ENCODE measurements at regions of chr5 and their contacts with region 1.

Region 1: DNA sequence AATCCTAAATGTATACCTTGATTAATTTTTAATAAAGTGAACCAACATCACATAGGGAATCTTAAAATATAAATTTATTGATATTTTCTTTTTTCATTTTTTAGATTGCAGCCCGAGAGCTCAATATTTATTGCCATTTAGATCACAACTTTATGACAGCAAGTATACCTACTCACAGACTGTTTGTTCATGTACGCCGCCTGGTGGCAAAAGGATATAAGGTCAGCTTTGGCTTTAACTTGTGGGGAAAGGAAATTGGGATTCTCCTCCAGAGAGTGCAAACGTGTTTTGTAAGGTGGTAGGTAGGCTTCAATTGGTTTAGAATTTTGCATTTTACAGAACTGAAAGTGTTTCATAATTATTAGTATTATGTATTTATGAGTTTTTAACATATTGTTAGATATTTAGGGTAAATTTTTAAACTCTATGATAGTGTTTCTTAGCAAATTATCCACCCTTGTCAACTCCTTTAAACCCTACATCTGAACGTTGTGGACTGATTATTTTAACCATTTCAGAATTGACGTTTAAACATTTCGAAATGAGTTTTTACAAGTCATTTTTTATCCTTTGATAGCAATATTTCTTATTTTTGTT is 17.5 kb upstream of the DHFR start:
- DNase-seq: peak; percentile 71
- H3K27ac ChIP-seq: no peak overlapping the region
- CTCF ChIP-seq: peak; percentile 95

Region 2: GRCh38 chr5:80346055-80346454 is 326.2 kb before region 1 on chr5:
- CTCF ChIA-PET with region 1: interaction called, 11 read pairs
- POLR2A ChIA-PET with region 1: no interaction called
- DNase-seq: peak; percentile 52
- H3K27ac ChIP-seq: no peak overlapping the region
- CTCF ChIP-seq: peak; percentile 51

Region 3: GRCh38 chr5:80481019-80481893 is 191.0 kb before region 1 on chr5:
- CTCF ChIA-PET with region 1: interaction called, 11 read pairs
- POLR2A ChIA-PET with region 1: no interaction called
- DNase-seq: peak; percentile 62
- H3K27ac ChIP-seq: no peak overlapping the region
- CTCF ChIP-seq: peak; percentile 75

Region 4: DNA sequence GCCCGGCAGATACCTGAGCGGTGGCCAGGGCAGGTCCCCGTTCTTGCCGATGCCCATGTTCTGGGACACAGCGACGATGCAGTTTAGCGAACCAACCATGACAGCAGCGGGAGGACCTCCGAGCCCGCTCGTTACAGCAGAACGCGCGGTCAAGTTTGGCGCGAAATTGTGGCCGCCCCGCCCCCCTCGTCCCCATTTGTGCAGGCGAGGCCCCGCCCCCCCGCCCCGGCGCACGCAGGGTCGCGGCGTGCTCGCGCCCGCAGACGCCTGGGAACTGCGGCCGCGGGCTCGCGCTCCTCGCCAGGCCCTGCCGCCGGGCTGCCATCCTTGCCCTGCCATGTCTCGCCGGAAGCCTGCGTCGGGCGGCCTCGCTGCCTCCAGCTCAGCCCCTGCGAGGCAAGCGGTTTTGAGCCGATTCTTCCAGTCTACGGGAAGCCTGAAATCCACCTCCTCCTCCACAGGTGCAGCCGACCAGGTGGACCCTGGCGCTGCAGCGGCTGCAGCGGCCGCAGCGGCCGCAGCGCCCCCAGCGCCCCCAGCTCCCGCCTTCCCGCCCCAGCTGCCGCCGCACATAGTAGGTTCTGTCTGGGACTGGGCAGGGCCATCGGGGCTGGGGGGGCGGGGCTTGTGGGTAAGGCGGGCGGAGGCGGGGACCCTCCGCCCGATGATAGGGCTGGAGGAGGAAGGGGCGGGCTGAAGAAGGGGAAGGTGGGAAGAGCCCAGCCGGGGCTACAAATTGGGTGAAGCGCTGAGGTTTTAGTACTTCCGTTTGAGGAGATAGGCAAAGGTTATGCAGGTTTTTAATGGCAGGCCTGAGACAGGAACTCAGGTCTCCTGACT is 17.6 kb before region 1 on chr5 and contains the starts of genes DHFR and MSH3:
- CTCF ChIA-PET with region 1: interaction called, 13 read pairs
- POLR2A ChIA-PET with region 1: no interaction called
- DNase-seq: peak; percentile 98
- H3K27ac ChIP-seq: peak within 1 kb of the TSS; percentile 93
- CTCF ChIP-seq: peak; percentile 43; the same call in 1 of the 2 replicates

Measured in RWPE1 (cell line).